ENCODE measurements at regions of chr12 and their contacts with region 1.

Region 1: DNA sequence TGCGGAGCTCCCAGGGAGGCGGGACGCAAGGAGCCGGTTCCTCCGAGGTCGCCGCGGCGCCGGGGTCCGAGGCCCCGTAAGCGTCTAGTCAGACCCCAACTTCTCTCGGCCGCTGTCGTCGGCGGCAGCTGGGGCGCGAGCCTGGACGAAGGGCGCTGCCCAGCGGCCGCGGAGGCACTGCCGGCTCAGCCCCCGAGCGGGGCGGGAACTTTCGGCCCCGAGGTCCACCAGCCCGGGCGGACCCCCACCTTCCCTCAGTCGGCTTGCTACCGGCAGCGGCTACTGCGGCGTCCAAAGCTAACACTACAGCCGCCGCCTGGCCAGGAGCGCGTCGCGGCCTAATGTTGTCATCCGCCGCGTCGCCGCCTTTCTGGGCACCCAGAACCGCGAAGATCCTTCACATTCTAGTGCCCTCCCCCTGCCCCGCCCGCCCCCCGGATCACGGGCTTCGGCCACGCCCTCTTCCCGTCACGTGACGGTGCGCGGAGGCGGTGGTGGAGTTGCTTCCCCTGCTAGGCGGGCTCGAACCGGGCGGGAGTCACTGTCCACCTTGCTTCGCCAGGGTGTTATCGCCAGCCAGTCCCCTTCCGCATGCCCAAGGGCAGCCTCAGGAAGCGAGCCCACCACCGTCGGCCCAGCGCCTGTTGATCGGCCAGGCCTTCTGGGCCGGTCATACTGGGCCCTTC is at the start of gene OSBPL8:
- DNase-seq: peak; percentile 90 to 98 (median 96)
- ATAC-seq: peak; percentile 58
- H3K4me3 ChIP-seq: peak within 1 kb of the TSS; percentile 88
- H3K4me3 Mint-ChIP-seq: peak within 1 kb of the TSS; percentile 94
- H3K27ac ChIP-seq: peak within 1 kb of the TSS; percentile 85 to 99
- H3K27ac Mint-ChIP-seq: peak within 1 kb of the TSS; percentile 95
- H3K4me1 ChIP-seq: peaks cover 16% of the 10 kb centered on the region
- H3K4me1 Mint-ChIP-seq: peaks cover 46% of the 10 kb centered on the region
- H3K27me3 ChIP-seq: no peaks in the 10 kb centered on the region
- H3K27me3 Mint-ChIP-seq: no peaks in the 10 kb centered on the region
- CTCF ChIP-seq: no peak
- total RNA-seq, gene OSBPL8: 154 to 160 TPM

Region 2: DNA sequence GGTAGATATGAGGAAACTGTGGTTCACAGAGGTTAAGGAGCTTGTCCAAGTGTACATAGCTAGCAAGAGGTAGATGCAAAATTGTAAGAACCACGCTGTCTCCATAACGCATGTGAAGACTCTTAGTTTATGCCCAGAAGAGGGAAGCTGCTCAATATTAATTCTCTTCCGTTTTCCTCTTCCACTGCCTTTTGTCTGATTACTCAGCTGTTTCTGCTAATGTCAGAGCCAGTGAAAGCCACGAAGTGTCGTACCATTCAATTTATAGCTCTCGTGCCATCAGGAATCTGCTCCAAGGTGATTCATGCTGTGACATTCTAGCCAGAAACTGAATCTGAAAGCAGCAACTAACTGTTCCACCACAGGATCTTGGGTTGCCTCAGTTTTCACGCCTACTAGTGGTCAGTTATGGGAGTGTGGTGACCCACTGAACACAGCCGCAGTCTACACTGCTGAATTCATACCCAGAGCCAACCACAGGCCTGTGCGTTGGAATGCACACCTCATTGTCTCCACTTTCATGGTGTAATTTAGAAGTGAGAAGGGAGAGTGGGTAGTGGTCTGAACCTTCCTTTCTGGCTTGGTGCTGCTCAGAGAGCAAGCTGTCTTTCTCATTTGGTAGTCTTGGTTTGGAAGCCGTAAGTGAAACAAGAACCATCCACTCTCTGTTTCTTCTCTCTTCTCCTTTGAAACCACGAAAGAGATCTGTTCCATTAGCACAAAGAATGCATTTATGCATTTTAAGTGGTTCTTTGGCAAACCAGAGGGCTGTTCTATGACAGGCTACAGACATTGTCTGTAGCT is 400.8 kb before region 1 on chr12:
- CTCF ChIA-PET with region 1: no interaction called
- POLR2A ChIA-PET with region 1: no interaction called
- intact Hi-C with region 1: no loop called
- DNase-seq: peak; percentile 16 to 81 (median 33)
- ATAC-seq: peak; percentile 94
- H3K4me3 ChIP-seq: peak overlapping the region; percentile 22
- H3K4me3 Mint-ChIP-seq: peak overlapping the region; percentile 72
- H3K27ac ChIP-seq: no peak overlapping the region
- H3K27ac Mint-ChIP-seq: no peak overlapping the region
- H3K4me1 ChIP-seq: peaks cover 8% of the 10 kb centered on the region
- H3K4me1 Mint-ChIP-seq: peaks cover 10% of the 10 kb centered on the region
- H3K27me3 ChIP-seq: no peaks in the 10 kb centered on the region
- H3K27me3 Mint-ChIP-seq: no peaks in the 10 kb centered on the region
- CTCF ChIP-seq: peak; percentile 67

Region 3: DNA sequence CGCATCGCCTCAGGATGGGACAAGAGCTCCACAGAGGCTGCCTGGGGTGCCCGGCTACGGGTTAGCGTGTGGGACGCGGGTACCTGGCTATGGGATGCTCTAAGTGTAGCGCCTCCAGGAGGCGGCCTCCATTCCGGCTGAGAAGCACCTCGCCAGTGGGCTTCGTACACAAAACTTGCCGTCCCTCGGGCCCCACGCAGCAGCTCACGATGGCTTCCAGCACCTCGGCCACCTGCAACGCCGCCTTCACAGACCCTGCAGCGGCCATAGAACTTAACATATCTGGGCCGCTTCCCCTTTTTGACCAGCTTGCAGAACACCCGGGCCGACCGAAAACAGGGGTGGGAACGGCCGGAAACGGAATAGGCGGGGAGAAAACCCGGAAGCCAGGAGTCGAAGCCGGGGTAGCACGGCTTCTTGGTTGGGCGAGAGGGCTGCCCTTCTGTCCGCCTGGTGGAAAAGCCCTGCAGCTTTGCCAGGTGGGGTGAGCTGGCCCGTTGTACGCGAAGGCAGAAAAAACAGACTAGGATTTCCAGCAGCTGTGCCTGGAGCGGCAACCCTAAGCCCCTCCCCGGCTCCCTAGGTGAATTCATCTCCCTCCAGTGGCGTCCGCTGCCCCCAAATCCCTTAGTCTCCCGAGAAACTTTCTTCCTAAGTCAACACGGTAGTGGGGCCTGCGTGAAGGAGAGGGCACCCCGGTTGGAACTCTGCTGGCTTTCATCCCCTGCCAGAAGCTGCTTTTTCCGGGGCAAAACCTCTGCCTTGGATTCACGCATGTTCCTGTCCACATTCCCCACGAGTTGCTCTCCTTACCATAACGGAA is 211.3 kb before region 1 on chr12 and contains the start of gene BBS10:
- CTCF ChIA-PET with region 1: no interaction called
- POLR2A ChIA-PET with region 1: interaction called, 13 read pairs
- intact Hi-C with region 1: loop called in 1 of 2 experiments (anchors 5 kb)
- DNase-seq: peak; percentile 75 to 92 (median 82)
- ATAC-seq: peak; percentile 96
- H3K4me3 ChIP-seq: peak within 1 kb of the TSS; percentile 81
- H3K4me3 Mint-ChIP-seq: peak within 1 kb of the TSS; percentile 96
- H3K27ac ChIP-seq: peak within 1 kb of the TSS; percentile 77
- H3K27ac Mint-ChIP-seq: peak within 1 kb of the TSS; percentile 95
- H3K4me1 ChIP-seq: peaks cover 15% of the 10 kb centered on the region
- H3K4me1 Mint-ChIP-seq: peaks cover 43% of the 10 kb centered on the region
- H3K27me3 ChIP-seq: no peaks in the 10 kb centered on the region
- H3K27me3 Mint-ChIP-seq: no peaks in the 10 kb centered on the region
- CTCF ChIP-seq: peak; percentile 33
- total RNA-seq, gene BBS10: 1.4 TPM

Region 4: DNA sequence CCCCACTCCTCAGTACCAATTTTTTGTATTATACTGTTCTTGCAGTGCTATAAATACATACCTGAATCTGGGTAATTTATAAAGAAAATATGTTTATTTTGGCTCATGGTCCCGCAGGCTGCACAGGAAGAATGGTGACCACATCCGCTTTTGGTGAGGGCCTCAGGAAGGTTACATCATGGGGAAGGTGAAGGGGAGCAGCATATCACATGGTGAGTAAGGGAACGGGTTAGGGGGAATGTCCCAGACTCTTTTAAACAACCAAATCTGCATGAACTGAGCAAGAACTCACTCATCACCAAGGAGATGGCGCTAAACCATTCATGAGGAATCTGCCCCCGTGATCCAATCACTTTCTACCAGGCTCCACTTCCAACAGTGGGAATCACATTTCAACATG is 40.0 kb before region 1 on chr12:
- CTCF ChIA-PET with region 1: no interaction called
- POLR2A ChIA-PET with region 1: interaction called, 3 read pairs
- intact Hi-C with region 1: loop called (anchors 5 kb)
- DNase-seq: peak in 3 of 14 experiments; percentile 26 to 43 (median 31)
- ATAC-seq: peak; percentile 19
- H3K4me3 ChIP-seq: no peak overlapping the region
- H3K4me3 Mint-ChIP-seq: no peak overlapping the region
- H3K27ac ChIP-seq: no peak overlapping the region
- H3K27ac Mint-ChIP-seq: peak overlapping the region; percentile 55
- H3K4me1 ChIP-seq: peaks cover 8% of the 10 kb centered on the region
- H3K4me1 Mint-ChIP-seq: peaks cover 87% of the 10 kb centered on the region
- H3K27me3 ChIP-seq: no peaks in the 10 kb centered on the region
- H3K27me3 Mint-ChIP-seq: no peaks in the 10 kb centered on the region
- CTCF ChIP-seq: no peak

Region 5: DNA sequence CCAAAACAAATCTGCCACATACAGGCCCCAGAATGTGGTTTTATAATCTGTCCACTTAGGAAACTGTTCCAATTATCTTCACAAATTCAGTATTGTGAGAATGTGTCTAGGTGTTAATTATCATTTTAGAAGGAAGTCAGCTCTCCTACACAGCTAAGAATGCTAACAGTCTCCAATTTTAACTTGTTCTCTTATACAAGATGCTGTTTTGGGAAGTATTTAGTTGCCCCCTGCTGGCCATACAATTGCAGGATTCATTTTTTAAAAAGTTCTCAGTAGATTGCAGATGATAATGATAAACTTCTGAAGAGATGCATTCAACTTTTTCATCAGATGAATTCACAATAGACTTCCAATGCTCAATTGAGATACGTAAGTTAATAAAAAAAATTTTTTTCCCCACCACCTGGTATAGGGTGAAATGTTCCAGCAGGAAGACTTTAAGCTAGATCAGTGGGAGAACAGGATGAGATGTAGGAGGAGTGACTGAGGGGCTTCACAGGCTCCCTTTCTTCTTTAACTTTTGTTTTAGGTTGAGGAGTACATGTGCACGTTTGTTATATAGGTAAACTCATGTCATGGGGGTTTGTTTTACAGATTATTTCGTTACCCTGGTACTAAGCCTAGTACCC is 27.3 kb after region 1 on chr12:
- CTCF ChIA-PET with region 1: interaction called, 5 read pairs
- POLR2A ChIA-PET with region 1: interaction called, 13 read pairs
- intact Hi-C with region 1: no loop called
- DNase-seq: peak in 12 of 14 experiments; percentile 4 to 74 (median 15)
- ATAC-seq: peak; percentile 83
- H3K4me3 ChIP-seq: no peak overlapping the region
- H3K4me3 Mint-ChIP-seq: no peak overlapping the region
- H3K27ac ChIP-seq: no peak overlapping the region
- H3K27ac Mint-ChIP-seq: no peak overlapping the region
- H3K4me1 ChIP-seq: no peaks in the 10 kb centered on the region
- H3K4me1 Mint-ChIP-seq: peaks cover 4% of the 10 kb centered on the region
- H3K27me3 ChIP-seq: no peaks in the 10 kb centered on the region
- H3K27me3 Mint-ChIP-seq: no peaks in the 10 kb centered on the region
- CTCF ChIP-seq: peak; percentile 86